ENCODE measurements at regions of chr1 and their contacts with region 1.

Region 1: GRCh38 chr1:224434691-224435317 is at the start of gene WDR26:
- DNase-seq: peak; percentile 92
- ATAC-seq: peak; percentile 85
- H3K4me3 Mint-ChIP-seq: peak within 1 kb of the TSS; percentile 81
- H3K27ac Mint-ChIP-seq: peak within 1 kb of the TSS; percentile 97
- H3K4me1 Mint-ChIP-seq: peaks cover 52% of the 10 kb centered on the region
- H3K27me3 Mint-ChIP-seq: no peaks in the 10 kb centered on the region
- total RNA-seq, gene WDR26: 74.0 to 75.6 TPM

Region 2: GRCh38 chr1:223712194-223712849 is 722.5 kb before region 1 on chr1 and contains the start of gene CAPN2:
- CTCF ChIA-PET with region 1: no interaction called
- POLR2A ChIA-PET with region 1: no interaction called
- intact Hi-C with region 1: loop called in 1 of 2 experiments (anchors 10 kb)
- DNase-seq: peak; percentile 76
- ATAC-seq: peak; percentile 47
- H3K4me3 Mint-ChIP-seq: peak within 1 kb of the TSS; percentile 80
- H3K27ac Mint-ChIP-seq: peak within 1 kb of the TSS; percentile 82
- H3K4me1 Mint-ChIP-seq: peaks cover 62% of the 10 kb centered on the region
- H3K27me3 Mint-ChIP-seq: no peaks in the 10 kb centered on the region
- total RNA-seq, gene CAPN2: 31.1 to 33.1 TPM

Region 3: DNA sequence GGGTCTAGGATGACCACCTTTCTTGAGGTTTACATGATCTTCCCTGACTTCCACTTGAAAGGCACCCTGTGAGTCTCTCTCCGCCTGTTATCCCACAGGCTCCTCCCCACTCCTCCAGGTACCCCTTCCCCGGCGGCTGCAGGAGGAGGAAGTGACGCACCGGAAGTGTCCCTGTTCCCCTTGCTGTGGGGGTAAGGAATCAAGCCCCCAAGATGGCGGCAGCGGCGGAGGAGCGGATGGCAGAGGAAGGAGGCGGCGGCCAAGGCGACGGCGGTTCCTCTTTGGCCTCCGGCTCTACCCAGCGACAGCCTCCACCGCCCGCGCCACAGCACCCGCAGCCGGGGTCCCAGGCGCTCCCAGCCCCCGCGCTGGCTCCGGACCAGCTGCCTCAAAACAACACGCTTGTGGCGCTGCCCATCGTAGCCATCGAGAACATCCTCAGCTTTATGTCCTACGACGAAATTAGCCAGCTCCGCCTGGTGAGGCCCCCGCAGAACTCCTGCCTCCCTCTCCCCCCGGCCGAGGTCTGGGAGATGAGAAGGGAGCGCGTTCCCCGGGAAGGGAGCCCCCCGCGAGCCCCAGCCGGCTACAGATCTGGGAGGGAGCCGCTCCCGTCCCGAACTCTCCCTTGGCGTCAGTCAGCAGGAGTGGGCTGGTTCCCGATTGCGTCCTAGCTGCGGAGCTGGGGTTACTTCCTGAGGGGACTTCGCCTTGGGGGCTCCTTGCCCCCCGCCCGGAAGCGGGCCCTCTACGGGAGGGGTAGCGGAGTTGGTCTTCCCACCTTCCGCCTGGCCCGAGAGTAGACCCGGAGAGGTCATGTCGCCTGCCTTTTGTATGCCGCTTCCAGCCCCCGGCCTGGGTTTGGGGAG is 320.7 kb before region 1 on chr1 and contains the start of gene FBXO28:
- CTCF ChIA-PET with region 1: no interaction called
- POLR2A ChIA-PET with region 1: interaction called, 3 read pairs
- intact Hi-C with region 1: loop called in 1 of 2 experiments (anchors 1 kb)
- DNase-seq: peak; percentile 98
- ATAC-seq: peak; percentile 99
- H3K4me3 Mint-ChIP-seq: peak within 1 kb of the TSS; percentile 85
- H3K27ac Mint-ChIP-seq: peak within 1 kb of the TSS; percentile 96
- H3K4me1 Mint-ChIP-seq: peaks cover 25% of the 10 kb centered on the region
- H3K27me3 Mint-ChIP-seq: no peaks in the 10 kb centered on the region
- total RNA-seq, gene FBXO28: 17.1 to 19.7 TPM

Region 4: GRCh38 chr1:224329842-224330753 is 104.7 kb before region 1 on chr1 and contains the start of gene NVL:
- CTCF ChIA-PET with region 1: no interaction called
- POLR2A ChIA-PET with region 1: interaction called, 3 read pairs
- intact Hi-C with region 1: loop called in 1 of 2 experiments (anchors 1 kb)
- DNase-seq: peak; percentile 89
- ATAC-seq: peak; percentile 81
- H3K4me3 Mint-ChIP-seq: peak within 1 kb of the TSS; percentile 88
- H3K27ac Mint-ChIP-seq: peak within 1 kb of the TSS; percentile 92
- H3K4me1 Mint-ChIP-seq: peaks cover 36% of the 10 kb centered on the region
- H3K27me3 Mint-ChIP-seq: no peaks in the 10 kb centered on the region
- total RNA-seq, gene NVL: 34.2 to 44.1 TPM

Region 5: GRCh38 chr1:224377676-224378006 is 57.2 kb before region 1 on chr1:
- CTCF ChIA-PET with region 1: interaction called, 3 read pairs
- POLR2A ChIA-PET with region 1: no interaction called
- intact Hi-C with region 1: loop called (anchors 2 to 5 kb)
- DNase-seq: peak; percentile 56
- ATAC-seq: peak; percentile 68
- H3K4me3 Mint-ChIP-seq: no peak overlapping the region
- H3K27ac Mint-ChIP-seq: peak overlapping the region; percentile 82
- H3K4me1 Mint-ChIP-seq: peaks cover 94% of the 10 kb centered on the region
- H3K27me3 Mint-ChIP-seq: no peaks in the 10 kb centered on the region

Region 6: GRCh38 chr1:224486801-224487583 is 52.2 kb after region 1 on chr1:
- CTCF ChIA-PET with region 1: no interaction called
- POLR2A ChIA-PET with region 1: no interaction called
- intact Hi-C with region 1: no loop called
- DNase-seq: no peak
- ATAC-seq: no peak
- H3K4me3 Mint-ChIP-seq: no peak overlapping the region
- H3K27ac Mint-ChIP-seq: no peak overlapping the region
- H3K4me1 Mint-ChIP-seq: peaks cover 9% of the 10 kb centered on the region
- H3K27me3 Mint-ChIP-seq: no peaks in the 10 kb centered on the region

Region 7: GRCh38 chr1:224497714-224498573 is 63.1 kb after region 1 on chr1:
- CTCF ChIA-PET with region 1: no interaction called
- POLR2A ChIA-PET with region 1: interaction called, 4 read pairs
- intact Hi-C with region 1: loop called in 1 of 2 experiments (anchors 2 kb)
- DNase-seq: peak; percentile 88
- ATAC-seq: peak; percentile 97
- H3K4me3 Mint-ChIP-seq: peak overlapping the region; percentile 44
- H3K27ac Mint-ChIP-seq: peak overlapping the region; percentile 96
- H3K4me1 Mint-ChIP-seq: peaks cover 42% of the 10 kb centered on the region
- H3K27me3 Mint-ChIP-seq: no peaks in the 10 kb centered on the region

Region 8: DNA sequence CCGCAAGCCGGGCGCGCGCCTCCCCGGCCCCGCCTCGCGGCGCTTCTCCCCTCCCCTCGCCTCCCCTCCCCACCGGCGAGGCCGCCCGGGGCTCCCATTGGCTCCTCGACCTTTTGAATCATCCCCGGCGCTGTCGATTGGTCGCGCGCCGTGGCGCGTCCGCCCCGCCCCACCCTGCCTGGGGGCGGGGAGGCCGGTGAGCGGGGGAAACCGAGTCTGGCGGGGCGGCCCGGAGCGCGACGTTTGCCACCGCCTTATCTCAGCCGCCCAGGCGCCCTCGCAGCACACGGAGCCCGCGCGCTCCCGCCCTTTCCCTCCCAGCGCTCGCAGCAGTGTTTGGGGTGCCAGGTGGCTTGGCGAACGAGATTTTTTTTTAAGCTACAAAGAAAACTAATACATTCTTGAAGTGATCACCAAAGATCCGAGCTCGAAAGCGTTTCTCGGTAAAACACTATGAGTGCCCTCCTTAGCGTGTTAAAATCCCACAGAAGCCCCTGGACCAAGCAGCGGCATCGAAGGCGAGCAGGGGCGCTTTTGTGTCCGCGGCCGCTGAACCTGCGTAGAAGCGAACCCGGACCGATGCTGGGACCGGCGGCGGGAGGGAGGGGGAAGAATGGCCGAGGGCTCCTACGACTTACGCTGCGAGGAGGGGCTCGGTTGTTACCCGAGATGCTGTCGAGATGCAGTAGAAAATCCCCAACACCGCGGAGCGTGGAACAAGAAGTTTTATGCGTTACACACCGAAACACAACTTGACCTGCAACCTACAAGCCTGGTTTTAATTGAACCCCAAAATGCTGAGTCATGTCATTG is 993.5 kb after region 1 on chr1:
- CTCF ChIA-PET with region 1: no interaction called
- POLR2A ChIA-PET with region 1: no interaction called
- intact Hi-C with region 1: loop called in 1 of 2 experiments (anchors 10 kb)
- DNase-seq: peak; percentile 95
- ATAC-seq: peak; percentile 92
- H3K4me3 Mint-ChIP-seq: peak overlapping the region; percentile 86
- H3K27ac Mint-ChIP-seq: peak overlapping the region; percentile 96
- H3K4me1 Mint-ChIP-seq: peaks cover 45% of the 10 kb centered on the region
- H3K27me3 Mint-ChIP-seq: no peaks in the 10 kb centered on the region

Measured in activated CD4-positive, alpha-beta T cell treated with anti-CD3 and anti-CD28 coated beads for 36 hours (primary cell).